Right cardiac atrium (tissue), 5 donors: ENCODE measurements at regions of chr3 and their contacts with region 1.

Region 1: DNA sequence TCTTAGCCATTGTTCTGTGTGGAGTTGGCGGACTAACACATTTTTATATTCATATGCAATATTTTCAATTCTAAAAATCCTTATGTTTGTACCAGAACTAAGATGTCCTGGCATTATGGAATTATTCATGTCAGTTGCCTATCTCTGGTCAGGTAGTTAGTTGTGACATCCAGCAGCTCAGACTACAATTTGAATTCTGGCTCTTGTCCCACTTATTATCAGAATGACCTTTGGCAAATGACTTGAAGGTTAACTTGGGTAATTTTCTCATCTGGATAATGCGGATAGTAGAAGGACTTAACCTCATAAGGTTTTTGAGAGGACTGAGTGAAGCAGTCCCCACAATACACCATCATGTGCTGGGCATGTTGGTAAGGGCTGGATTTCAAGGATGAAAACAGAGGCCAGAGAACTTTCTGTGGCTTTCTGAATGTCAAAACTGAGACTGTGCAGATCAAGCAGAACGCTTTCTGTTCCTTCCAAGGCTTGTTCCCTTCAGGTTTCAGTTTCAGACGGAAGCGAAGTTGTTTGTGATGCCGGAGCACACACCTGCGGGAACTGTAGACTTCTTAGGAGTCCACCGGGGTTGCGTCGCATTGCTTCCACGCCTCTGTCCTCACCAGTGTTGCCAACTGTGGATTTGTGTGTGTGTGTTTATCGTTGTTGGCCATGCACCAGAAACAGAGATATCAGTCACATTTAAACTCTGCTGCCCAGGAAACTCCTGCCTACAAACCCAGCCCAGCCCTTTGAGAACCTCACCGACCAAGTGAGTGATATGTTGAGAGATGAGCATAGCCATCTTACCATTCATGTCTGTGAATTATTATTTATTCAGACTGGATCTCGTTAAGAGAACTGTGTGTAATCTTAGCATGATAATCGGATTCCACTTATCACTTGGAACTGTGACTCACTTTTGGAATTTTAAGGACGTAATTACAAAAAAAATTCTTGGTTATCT is 76.0 kb downstream of the PTPRG start:
- DNase-seq: peak in 2 of 3 donors; percentile 59 to 70
- ATAC-seq: peak; percentile 78 to 86
- H3K4me3 ChIP-seq: peak overlapping the region; percentile 21
- H3K27ac ChIP-seq: peak overlapping the region; percentile 78
- H3K4me1 ChIP-seq: peaks cover 6% of the 10 kb centered on the region
- H3K27me3 ChIP-seq: no peaks in the 10 kb centered on the region

Region 2: GRCh38 chr3:61574854-61575253 is 62.5 kb before region 1 on chr3:
- intact Hi-C with region 1: loop called in 1 of 4 experiments (anchors 10 kb)
- DNase-seq: peak in 1 of 3 donors; percentile 31
- ATAC-seq: peak in 1 of 2 donors; percentile 22
- H3K4me3 ChIP-seq: no peak overlapping the region
- H3K27ac ChIP-seq: no peak overlapping the region
- H3K4me1 ChIP-seq: peaks cover 12% of the 10 kb centered on the region
- H3K27me3 ChIP-seq: no peaks in the 10 kb centered on the region